PC-9 (cell line): ENCODE measurements at regions of chr14 and their contacts with region 1.

Region 1: DNA sequence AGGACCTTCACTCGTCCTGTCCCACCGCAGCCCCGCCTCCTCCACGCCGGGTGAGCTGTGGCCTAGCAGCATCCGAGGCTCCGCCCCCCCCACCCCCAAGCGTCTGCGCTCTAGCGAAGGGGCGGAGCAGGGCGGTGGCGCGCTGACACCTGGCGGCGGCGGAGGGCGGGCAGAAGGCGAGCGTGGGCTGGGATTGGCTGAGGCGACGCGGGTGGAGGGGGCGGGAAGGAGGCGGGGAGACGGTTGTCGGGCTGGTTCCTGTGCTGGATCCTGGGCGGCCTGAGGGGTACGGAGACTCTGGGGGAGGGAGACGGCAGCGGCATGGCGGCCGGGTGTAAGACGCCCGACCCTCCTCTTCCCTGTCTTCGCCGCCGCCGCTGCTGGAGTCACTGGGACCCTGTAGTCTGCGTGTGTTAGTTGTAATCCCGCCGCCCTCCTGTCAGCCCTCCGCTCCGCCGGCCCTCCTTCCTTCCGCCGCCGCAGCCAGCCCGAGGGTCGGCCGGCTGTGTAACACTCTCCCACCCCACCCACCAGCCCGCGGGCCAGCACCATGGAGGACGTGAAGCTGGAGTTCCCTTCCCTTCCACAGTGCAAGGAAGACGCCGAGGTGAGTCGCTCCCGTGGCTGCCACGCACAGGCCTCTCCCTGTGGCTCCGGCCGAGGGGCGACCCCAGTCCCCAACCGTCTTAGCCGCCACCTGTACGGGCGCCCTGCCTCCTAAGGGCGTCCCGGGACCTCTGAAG is at the start of gene STYX:
- DNase-seq: peak; percentile 94 to 99
- H3K4me3 ChIP-seq: peak within 1 kb of the TSS; percentile 94
- H3K27ac ChIP-seq: peak within 1 kb of the TSS; percentile 25
- H3K4me1 ChIP-seq: peaks cover 6% of the 10 kb centered on the region; the same call in 1 of the 2 replicates
- H3K27me3 ChIP-seq: no peaks in the 10 kb centered on the region
- CTCF ChIP-seq: peak; percentile 31; the same call in 1 of the 2 replicates
- total RNA-seq, gene STYX: 7.0 and 10.8 TPM in 2 replicates

Region 2: DNA sequence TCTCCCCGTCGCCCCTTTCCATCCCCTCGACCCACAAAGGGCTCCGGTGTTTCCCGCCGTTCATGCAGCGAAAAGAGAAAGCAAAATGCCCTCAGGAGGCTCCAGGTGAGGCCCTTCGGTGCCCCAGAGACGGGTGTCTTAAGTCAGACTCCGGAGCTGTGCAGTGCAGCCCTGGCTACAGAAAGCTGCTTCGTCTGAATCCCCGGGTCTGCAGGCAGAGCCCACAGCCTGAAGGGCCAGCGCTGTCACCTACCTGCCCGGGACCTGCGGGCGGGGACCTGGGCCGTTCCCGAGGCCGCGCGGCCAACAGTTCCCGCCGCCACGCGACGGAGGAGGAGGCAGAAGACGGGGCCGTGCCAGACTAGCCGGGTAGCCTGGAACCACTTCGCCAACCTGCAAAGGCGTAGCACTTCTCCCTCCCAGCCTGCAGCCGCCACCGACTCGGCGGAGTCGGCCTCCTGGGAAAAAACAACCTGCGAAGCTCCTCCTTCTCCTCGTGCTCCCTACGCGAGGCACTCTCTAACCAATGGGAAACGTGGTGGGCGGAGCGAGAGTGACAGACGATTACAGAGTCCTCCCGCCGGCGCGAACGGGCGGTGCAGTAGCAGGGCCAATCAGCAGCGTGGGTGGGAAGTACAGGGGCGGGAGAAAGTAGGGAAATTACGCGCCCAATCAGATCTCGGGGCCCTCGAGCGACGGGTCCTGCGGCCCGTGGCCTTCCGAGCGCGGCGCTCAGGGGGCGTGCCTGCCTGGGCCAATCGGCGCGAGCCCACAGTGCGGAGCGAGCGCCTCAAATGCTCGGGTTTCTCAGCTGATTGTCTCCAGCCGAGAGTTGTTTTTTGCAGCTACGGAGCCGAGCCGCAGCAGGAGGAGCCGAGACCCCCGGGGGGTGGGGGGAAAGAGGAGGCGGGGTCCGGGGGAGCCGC is 177.8 kb before region 1 on chr14 and contains the starts of genes GPR137C and TXNDC16:
- CTCF ChIA-PET with region 1: no interaction called
- POLR2A ChIA-PET with region 1: interaction called, 15 read pairs
- intact Hi-C with region 1: no loop called
- DNase-seq: peak; percentile 96 to 99
- H3K4me3 ChIP-seq: peak within 1 kb of the TSS; percentile 65
- H3K27ac ChIP-seq: peak within 1 kb of the TSS; percentile 33; the same call in 1 of the 2 replicates
- H3K4me1 ChIP-seq: peaks cover 21% of the 10 kb centered on the region
- H3K27me3 ChIP-seq: no peaks in the 10 kb centered on the region
- CTCF ChIP-seq: no peak
- total RNA-seq, gene GPR137C: 1.1 and 1.2 TPM in 2 replicates
- total RNA-seq, gene TXNDC16: 5.7 and 7.9 TPM in 2 replicates

Region 3: DNA sequence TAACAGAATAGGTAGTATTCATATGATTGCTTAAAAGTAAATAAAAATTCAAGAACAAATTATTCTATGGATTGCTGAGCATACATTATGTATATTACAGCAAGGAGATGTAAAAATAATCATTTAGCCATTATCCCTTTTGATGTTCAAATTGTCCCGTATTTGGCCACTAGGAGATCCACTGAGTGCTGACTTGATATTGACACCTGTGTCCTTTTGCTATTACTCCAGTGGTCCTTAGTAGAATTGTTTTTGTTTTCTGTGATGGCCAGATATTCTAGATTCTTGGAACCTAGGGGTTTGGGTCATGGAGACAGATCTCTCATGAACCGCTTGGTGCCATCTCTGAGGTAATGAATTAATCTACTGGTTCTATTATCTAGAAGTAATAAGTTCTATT is 51.5 kb before region 1 on chr14:
- CTCF ChIA-PET with region 1: no interaction called
- POLR2A ChIA-PET with region 1: interaction called, 11 read pairs
- intact Hi-C with region 1: no loop called
- DNase-seq: peak in 1 of 2 experiments; percentile 41
- H3K4me3 ChIP-seq: no peak overlapping the region
- H3K27ac ChIP-seq: no peak overlapping the region
- H3K4me1 ChIP-seq: no peaks in the 10 kb centered on the region
- H3K27me3 ChIP-seq: no peaks in the 10 kb centered on the region
- CTCF ChIP-seq: peak; percentile 54; the same call in 1 of the 2 replicates

Region 4: GRCh38 chr14:52706724-52707706 is 23.1 kb before region 1 on chr14 and contains the start of gene PSMC6:
- CTCF ChIA-PET with region 1: no interaction called
- POLR2A ChIA-PET with region 1: no interaction called
- intact Hi-C with region 1: loop called (anchors 1 kb)
- DNase-seq: peak; percentile 77 to 83
- H3K4me3 ChIP-seq: peak within 1 kb of the TSS; percentile 74
- H3K27ac ChIP-seq: peak within 1 kb of the TSS; percentile 84
- H3K4me1 ChIP-seq: peaks cover 36% of the 10 kb centered on the region
- H3K27me3 ChIP-seq: no peaks in the 10 kb centered on the region
- CTCF ChIP-seq: no peak
- total RNA-seq, gene PSMC6: 83.0 and 96.5 TPM in 2 replicates

Region 5: GRCh38 chr14:52791203-52792096 is 61.4 kb after region 1 on chr14 and contains the start of gene GNPNAT1:
- CTCF ChIA-PET with region 1: no interaction called
- POLR2A ChIA-PET with region 1: interaction called, 4 read pairs
- intact Hi-C with region 1: loop called (anchors 2 kb)
- DNase-seq: peak; percentile 82 to 94
- H3K4me3 ChIP-seq: peak within 1 kb of the TSS; percentile 85
- H3K27ac ChIP-seq: peak within 1 kb of the TSS; percentile 90
- H3K4me1 ChIP-seq: peaks cover 23% of the 10 kb centered on the region
- H3K27me3 ChIP-seq: no peaks in the 10 kb centered on the region
- CTCF ChIP-seq: no peak
- total RNA-seq, gene GNPNAT1: 43.2 and 45.2 TPM in 2 replicates